K562 (cell line): ENCODE measurements at regions of chr20 and their contacts with region 1.

Region 1: DNA sequence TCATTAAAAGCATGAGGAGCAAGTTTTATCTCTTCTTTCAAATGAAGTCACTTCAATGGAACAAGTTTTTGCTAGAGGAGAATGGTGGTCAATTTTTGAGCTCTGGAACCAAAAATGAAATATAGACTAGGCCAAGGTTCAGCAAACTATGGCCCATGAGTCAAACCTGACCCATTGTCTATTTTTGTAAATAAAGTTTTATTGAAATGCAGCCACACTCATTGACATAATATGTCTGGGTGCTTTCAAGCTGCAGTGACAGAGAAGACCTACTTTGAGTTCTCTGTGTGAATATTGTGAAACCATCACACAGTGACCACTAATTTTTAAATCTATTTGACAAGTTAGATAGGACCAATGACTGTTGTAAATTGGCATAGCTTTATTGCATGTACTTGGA is 13.4 kb downstream of the RAE1 start:
- DNase-seq: no peak
- ATAC-seq: no peak
- H3K4me3 ChIP-seq: no peak overlapping the region
- H3K27ac ChIP-seq: no peak overlapping the region
- H3K4me1 ChIP-seq: no peaks in the 10 kb centered on the region
- H3K27me3 ChIP-seq: no peaks in the 10 kb centered on the region
- CTCF ChIP-seq: no peak
- EP300 ChIP-seq: no peak
- POLR2A ChIP-seq: no peak
- RAD21 ChIP-seq: no peak

Region 2: GRCh38 chr20:57374931-57375651 is 10.6 kb after region 1 on chr20:
- CTCF ChIA-PET with region 1: no interaction called
- POLR2A ChIA-PET with region 1: interaction called, 16 read pairs
- in situ Hi-C with region 1: no loop called
- intact Hi-C with region 1: no loop called
- DNase-seq: no peak
- ATAC-seq: no peak
- H3K4me3 ChIP-seq: no peak overlapping the region
- H3K27ac ChIP-seq: no peak overlapping the region
- H3K4me1 ChIP-seq: peaks cover 0 to 3% of the 10 kb centered on the region in 2 experiments; a peak in 2 of 5 replicates
- H3K27me3 ChIP-seq: no peaks in the 10 kb centered on the region
- CTCF ChIP-seq: no peak
- EP300 ChIP-seq: no peak
- POLR2A ChIP-seq: no peak
- RAD21 ChIP-seq: no peak

Region 3: GRCh38 chr20:57435498-57436222 is 71.2 kb after region 1 on chr20:
- CTCF ChIA-PET with region 1: no interaction called
- POLR2A ChIA-PET with region 1: no interaction called
- in situ Hi-C with region 1: no loop called
- intact Hi-C with region 1: no loop called
- DNase-seq: peak; percentile 48 to 73 (median 60)
- ATAC-seq: peak; percentile 68
- H3K4me3 ChIP-seq: no peak overlapping the region
- H3K27ac ChIP-seq: no peak overlapping the region
- H3K4me1 ChIP-seq: peaks cover 42 to 43% of the 10 kb centered on the region in 2 experiments
- H3K27me3 ChIP-seq: no peaks in the 10 kb centered on the region
- CTCF ChIP-seq: peak; percentile 26 to 37 (median 28); a peak in 4 of 6 replicates
- EP300 ChIP-seq: no peak
- POLR2A ChIP-seq: no peak
- RAD21 ChIP-seq: peak in 1 of 2 experiments; percentile 48; a peak in 2 of 4 replicates